ENCODE measurements at regions of chr14 and their contacts with region 1.

Region 1: GRCh38 chr14:54922598-54922997 is 20.0 kb upstream of the GCH1 start:
- DNase-seq: no peak
- H3K4me3 ChIP-seq: no peak overlapping the region
- CTCF ChIP-seq: no peak

Region 2: DNA sequence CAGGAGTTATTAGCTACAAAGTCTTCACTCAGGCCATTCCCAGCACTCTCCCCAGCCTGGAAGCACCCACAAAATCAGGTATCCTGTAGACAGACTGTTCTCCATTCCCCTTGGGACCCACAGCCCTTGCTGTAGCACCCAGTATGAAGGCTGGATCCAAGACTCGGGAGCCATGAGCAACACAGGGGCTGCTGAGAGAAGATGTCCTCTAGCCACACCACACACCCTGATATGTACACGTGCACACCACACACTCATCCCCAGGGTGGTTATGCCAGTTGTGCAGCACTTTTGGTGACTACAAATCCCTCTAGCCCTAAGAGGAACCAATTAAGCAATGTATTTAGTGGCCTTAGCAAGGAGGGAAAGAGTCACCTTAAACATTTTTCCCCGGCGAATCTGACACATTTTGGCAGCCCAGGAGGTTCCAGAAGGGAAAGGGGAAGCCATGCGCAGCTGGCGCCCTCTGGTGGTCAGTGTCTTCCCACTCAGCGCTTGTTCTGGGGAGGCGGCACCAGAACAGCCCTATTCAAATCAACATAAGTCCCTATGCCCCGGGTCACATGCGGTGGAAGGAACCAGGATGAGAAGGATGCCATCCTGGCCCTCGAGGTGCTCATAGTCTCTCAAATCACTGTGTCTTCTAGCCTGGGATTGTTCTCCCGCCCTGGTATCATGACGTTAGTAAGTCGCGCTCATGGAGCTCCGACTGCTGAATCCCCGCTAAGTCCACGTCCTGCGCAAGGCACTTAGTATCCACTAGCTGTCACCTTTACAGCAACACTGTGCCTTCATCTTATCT is 116.9 kb before region 1 on chr14:
- in situ Hi-C with region 1: no loop called
- DNase-seq: peak; percentile 66
- H3K4me3 ChIP-seq: no peak overlapping the region
- CTCF ChIP-seq: peak; percentile 94

Region 3: DNA sequence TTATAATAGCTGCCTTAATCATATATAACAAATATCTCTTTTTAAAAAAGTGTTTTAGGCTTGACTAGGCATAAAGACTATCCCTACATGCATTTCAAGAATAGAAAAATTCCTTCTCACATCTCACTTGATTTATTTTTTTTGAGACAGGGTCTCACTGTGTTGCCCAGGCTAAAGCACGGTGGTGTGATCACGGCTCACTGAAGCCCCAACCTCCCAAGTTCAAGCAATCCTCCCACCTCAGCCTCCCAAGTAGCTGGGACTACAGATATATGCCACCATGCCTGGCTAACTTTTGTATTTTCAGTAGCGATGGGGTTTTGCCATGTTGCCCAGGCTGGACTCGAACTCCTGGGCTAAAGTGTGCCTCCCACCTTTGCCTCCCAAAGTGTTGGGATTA is 44.9 kb after region 1 on chr14:
- in situ Hi-C with region 1: no loop called
- DNase-seq: no peak
- H3K4me3 ChIP-seq: no peak overlapping the region
- CTCF ChIP-seq: no peak

Region 4: DNA sequence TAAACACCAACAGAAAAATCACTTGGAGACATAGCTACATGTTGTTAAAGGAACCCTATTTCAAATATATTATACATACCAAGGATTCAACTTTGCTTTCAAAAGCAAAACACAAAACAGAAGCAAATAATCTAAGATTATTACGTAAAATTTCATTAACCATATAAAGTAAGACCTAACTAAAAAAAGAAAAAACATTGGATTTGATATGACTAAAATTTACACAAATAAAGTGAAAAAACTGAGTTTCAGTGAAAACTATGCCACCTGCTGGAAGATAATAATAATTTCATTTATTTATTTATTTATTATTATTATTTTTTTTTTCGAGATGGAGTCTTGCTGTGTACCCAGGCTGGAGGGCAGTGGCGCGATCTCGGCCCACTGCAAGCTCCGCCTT is 59.1 kb after region 1 on chr14:
- in situ Hi-C with region 1: loop called (anchors 10 kb)
- DNase-seq: peak; percentile 3
- H3K4me3 ChIP-seq: no peak overlapping the region
- CTCF ChIP-seq: no peak

Region 5: DNA sequence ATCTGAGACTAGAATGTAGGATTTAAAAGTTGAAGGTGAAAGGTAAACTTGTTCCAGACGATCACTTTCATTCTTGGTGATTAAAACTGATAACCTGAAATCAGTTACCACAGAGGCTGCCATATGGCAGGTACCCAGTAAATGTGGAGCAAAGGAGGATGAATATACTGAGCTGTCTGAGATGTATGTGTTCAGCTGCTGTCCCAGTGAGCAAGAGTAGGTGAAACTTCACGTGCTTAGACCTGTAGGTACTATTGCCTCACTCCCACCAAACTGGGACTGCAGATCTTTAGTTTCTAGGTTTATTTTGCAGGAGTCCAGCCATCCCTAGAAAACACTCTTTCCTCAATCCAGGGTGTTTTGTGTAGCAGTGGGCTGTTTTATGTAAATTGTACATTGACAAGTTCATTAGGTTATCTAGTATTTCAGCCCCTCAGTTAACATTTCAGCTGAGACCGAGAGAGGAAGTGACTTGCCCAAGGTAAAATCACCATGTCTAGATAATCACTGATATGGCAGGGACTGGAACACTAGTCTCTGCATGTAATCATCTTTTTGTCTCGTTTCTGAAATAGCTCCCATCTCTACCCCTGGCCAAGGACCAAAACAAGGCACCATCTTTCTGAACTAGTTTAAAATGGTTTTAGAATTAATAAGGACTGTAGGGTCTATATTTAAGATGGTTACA is 426.3 kb after region 1 on chr14:
- in situ Hi-C with region 1: no loop called
- DNase-seq: no peak
- H3K4me3 ChIP-seq: no peak overlapping the region
- CTCF ChIP-seq: no peak

Measured in astrocyte of the cerebellum (primary cell).